ENCODE measurements at regions of chrX and their contacts with region 1.

Region 1: GRCh38 chrX:131746474-131746968 is 202.6 kb downstream of the OR13H1 start:
- DNase-seq: peak; percentile 87
- ATAC-seq: peak; percentile 68
- H3K4me3 ChIP-seq: peak overlapping the region; percentile 63
- H3K27ac ChIP-seq: peak overlapping the region; percentile 93
- H3K4me1 ChIP-seq: no peaks in the 10 kb centered on the region
- H3K27me3 ChIP-seq: no peaks in the 10 kb centered on the region
- CTCF ChIP-seq: peak; percentile 28 to 62 (median 41); a peak in 4 of 6 replicates
- EP300 ChIP-seq: no peak; a peak in 1 of 4 replicates
- POLR2A ChIP-seq: no peak
- RAD21 ChIP-seq: peak; percentile 58

Region 2: DNA sequence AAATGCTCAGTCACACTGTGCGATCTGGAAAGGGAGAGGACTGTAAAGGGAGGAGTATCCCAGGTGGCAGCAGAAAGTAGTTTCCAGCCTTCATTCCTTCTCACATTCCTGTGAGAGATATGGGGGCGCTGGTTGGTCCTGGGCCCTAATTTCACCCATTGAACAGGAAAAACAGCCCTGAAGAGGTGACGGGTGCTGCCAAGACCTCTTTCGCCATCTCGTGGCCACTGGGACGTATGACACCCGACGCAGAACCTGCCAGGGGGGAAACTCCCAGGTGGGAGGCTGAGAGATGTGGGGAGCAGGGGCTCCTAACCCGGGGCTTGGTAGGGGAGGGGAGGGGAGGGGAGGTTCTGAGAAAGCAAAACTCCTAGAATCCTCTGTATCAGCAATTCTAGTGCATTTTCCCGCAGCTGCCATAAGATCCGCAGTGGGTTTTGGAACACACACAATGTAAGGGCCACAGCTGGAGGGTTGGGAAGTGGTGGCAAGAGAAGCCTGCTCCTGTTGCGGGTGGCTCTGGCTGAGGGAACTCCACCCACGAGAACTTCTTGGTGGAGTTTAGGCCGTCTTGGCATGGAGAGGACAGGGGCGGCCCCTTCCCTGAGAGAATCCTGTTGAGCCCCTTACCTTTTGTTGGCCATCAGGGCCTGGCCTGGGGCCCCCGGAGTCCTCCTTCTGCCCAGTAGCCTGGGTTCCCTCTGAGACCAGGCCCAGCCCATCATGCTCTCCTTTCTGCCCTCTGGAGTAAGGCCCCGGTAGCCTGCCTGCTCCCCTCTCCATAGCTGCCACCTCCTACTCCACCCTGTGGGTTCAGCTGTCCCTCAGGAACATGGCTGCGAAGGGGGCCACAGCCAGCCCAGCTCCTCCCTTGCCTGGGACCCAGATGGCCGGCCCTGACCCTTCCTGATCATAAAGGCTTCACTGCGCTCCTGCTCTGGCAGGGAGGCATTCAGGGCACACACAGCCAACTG is 68.6 kb before region 1 on chrX:
- CTCF ChIA-PET with region 1: no interaction called
- POLR2A ChIA-PET with region 1: no interaction called
- RAD21 ChIA-PET with region 1: no interaction called
- SMC1A ChIA-PET with region 1: no interaction called
- in situ Hi-C with region 1: no loop called
- intact Hi-C with region 1: no loop called
- DNase-seq: no peak
- ATAC-seq: peak; percentile 94
- H3K4me3 ChIP-seq: no peak overlapping the region
- H3K27ac ChIP-seq: no peak overlapping the region
- H3K4me1 ChIP-seq: no peaks in the 10 kb centered on the region
- H3K27me3 ChIP-seq: no peaks in the 10 kb centered on the region
- CTCF ChIP-seq: peak; percentile 79 to 89 (median 82)
- EP300 ChIP-seq: no peak
- POLR2A ChIP-seq: no peak
- RAD21 ChIP-seq: peak; percentile 69

Region 3: DNA sequence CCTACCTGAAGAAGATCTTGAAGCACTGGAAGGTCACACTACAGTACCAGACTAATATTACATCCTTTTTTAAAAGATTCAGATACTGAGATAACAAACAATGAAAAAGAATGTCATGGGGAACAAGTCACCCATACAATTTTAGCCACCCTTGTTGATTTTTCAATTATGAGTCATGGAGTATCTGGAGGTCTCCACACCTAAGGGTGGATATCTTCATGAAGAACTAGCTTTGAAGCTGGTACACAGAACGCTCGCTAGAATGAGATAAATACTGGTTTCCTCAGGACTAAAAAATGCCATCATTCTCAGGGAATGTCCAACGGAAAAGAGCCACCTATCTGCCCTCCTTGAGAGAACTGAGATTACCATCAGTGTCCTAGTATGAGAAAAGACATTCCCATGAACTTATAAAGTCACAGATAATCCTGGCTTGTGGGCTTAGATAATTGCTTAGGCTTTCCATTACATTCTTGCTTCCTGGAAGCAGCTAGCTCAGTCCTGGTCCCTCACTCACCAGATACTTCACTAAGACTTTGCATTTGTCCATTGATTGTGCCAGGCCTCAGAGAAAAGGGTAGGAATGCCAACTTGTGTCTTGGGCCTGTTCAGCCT is 36.0 kb before region 1 on chrX:
- CTCF ChIA-PET with region 1: interaction called, 7 read pairs
- POLR2A ChIA-PET with region 1: no interaction called
- RAD21 ChIA-PET with region 1: interaction called, 16 read pairs
- SMC1A ChIA-PET with region 1: interaction called, 9 read pairs
- in situ Hi-C with region 1: no loop called
- intact Hi-C with region 1: loop called (anchors 1 kb)
- DNase-seq: no peak
- ATAC-seq: 0 out of 3 replicates have a peak, but pooled peaks have one; percentile 21
- H3K4me3 ChIP-seq: no peak overlapping the region
- H3K27ac ChIP-seq: peak overlapping the region; percentile 48
- H3K4me1 ChIP-seq: no peaks in the 10 kb centered on the region
- H3K27me3 ChIP-seq: no peaks in the 10 kb centered on the region
- CTCF ChIP-seq: no peak
- EP300 ChIP-seq: no peak
- POLR2A ChIP-seq: no peak
- RAD21 ChIP-seq: no peak

Region 4: GRCh38 chrX:131812836-131813825 is 66.6 kb after region 1 on chrX:
- CTCF ChIA-PET with region 1: interaction called, 9 read pairs
- POLR2A ChIA-PET with region 1: no interaction called
- RAD21 ChIA-PET with region 1: interaction called, 4 read pairs
- SMC1A ChIA-PET with region 1: interaction called, 5 read pairs
- in situ Hi-C with region 1: no loop called
- intact Hi-C with region 1: loop called (anchors 1 kb)
- DNase-seq: peak; percentile 92
- ATAC-seq: peak; percentile 95
- H3K4me3 ChIP-seq: peak overlapping the region; percentile 58
- H3K27ac ChIP-seq: peak overlapping the region; percentile 84
- H3K4me1 ChIP-seq: peaks cover 13% of the 10 kb centered on the region; the same call in 1 of the 2 replicates
- H3K27me3 ChIP-seq: no peaks in the 10 kb centered on the region
- CTCF ChIP-seq: peak; percentile 45 to 86 (median 64); a peak in 5 of 6 replicates
- EP300 ChIP-seq: peak in 1 of 2 experiments; percentile 53; a peak in 2 of 4 replicates
- POLR2A ChIP-seq: no peak
- RAD21 ChIP-seq: peak; percentile 89

Region 5: DNA sequence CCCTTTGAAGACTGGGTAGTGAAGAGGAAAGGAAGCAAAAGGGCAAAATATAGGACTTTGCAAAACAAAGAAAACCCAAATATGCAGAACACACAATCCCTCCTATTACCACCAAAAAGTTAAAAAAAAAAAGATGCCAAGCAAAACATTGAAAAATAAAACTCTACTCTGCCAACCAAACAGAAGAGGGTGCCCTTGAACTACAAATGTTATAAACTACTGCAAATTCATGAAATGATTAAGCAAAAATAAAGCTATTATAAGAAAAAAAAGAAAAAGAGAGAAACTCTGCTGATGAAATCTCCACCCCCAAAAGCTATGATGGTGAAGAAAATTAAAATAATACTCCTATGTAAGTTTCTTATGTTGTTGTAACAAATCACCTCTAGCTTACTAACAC is 108.1 kb after region 1 on chrX:
- CTCF ChIA-PET with region 1: no interaction called
- POLR2A ChIA-PET with region 1: no interaction called
- RAD21 ChIA-PET with region 1: no interaction called
- SMC1A ChIA-PET with region 1: no interaction called
- in situ Hi-C with region 1: no loop called
- intact Hi-C with region 1: no loop called
- DNase-seq: no peak
- ATAC-seq: no peak
- H3K4me3 ChIP-seq: no peak overlapping the region
- H3K27ac ChIP-seq: no peak overlapping the region
- H3K4me1 ChIP-seq: no peaks in the 10 kb centered on the region
- H3K27me3 ChIP-seq: no peaks in the 10 kb centered on the region
- CTCF ChIP-seq: peak; percentile 6 to 31 (median 10); a peak in 2 of 6 replicates
- EP300 ChIP-seq: no peak
- POLR2A ChIP-seq: no peak
- RAD21 ChIP-seq: peak; percentile 51

Measured in GM12878 (cell line).